ENCODE measurements at regions of chr6 and their contacts with region 1.

Region 1: GRCh38 chr6:51025082-51025777 is 206.6 kb downstream of the TFAP2B start:
- DNase-seq: no peak
- H3K4me3 ChIP-seq: no peak overlapping the region
- H3K27ac ChIP-seq: no peak overlapping the region
- H3K4me1 ChIP-seq: no peaks in the 10 kb centered on the region
- H3K27me3 ChIP-seq: no peaks in the 10 kb centered on the region
- CTCF ChIP-seq: no peak
- POLR2A ChIP-seq: no peak

Region 2: GRCh38 chr6:51057296-51057695 is 32.1 kb after region 1 on chr6:
- intact Hi-C with region 1: loop called (anchors 2 kb)
- DNase-seq: no peak
- H3K4me3 ChIP-seq: no peak overlapping the region
- H3K27ac ChIP-seq: no peak overlapping the region
- H3K4me1 ChIP-seq: no peaks in the 10 kb centered on the region
- H3K27me3 ChIP-seq: no peaks in the 10 kb centered on the region
- CTCF ChIP-seq: no peak
- POLR2A ChIP-seq: no peak

Region 3: DNA sequence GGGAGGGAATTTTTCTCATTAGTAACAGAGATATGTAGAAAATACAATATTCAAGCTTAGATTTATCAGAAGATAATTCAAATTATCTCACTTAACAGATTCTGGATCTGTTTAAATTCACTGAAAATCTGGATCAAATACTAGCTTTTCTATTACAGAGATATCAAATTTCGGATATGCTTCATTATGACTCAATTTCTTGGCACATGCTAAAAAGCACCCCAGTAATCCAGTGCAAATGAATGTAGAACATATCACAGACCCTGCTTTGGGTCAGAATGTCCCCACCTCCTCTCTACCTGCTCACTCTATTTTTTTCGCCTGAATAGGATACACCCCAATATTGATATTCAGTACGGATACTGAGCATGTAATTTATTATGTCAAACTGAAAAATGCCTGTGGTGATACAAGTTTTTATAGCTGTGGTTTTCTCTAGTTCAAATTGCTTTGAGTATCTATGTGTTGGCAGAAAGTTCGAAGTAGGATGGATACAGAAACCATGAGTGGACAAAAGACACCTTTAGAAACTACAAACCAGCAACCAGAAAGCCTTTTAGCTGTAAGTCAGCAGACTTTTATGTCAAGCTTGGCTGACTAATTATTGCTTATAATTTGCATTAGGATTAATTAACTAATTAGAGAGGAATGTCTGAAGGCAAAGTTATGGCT is 83.5 kb after region 1 on chr6:
- intact Hi-C with region 1: no loop called
- DNase-seq: no peak
- H3K4me3 ChIP-seq: no peak overlapping the region
- H3K27ac ChIP-seq: no peak overlapping the region
- H3K4me1 ChIP-seq: no peaks in the 10 kb centered on the region
- H3K27me3 ChIP-seq: no peaks in the 10 kb centered on the region
- CTCF ChIP-seq: no peak
- POLR2A ChIP-seq: no peak